ENCODE measurements at regions of chr7 and their contacts with region 1.

Region 1: DNA sequence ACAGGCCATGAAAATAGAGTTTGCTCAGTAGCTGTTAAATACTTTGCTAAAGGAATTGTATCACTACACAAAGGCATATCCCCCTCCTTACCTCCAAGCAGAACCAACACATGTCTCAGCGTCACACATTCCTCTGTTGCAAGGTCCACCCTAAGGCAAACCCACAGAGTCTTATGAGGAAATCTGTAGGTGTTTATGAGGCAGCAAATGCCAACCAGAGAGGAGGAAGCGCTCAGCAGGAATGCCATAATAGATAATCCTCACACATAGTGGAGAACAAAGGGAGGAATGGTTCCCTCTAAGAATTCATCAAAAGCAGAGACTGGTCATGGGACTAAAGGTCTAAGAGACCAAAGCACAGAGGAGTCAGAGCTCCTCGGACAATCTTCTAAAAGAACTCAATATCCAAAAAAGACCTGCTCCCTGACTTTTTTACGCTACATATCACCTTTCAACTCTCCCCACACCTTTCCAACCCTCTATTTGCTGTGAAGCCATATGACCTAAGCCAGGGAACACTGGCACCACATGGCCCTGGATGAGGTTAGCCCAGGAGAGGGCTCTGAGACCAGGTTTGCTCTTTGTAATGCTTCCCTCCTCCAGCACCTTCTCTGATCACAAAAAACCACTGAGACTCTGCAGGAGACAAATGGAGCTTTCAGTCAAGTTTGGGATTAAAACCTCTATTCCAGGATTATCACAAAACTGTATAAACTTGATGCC is 7.3 kb downstream of the SLC25A13 start:
- DNase-seq: no peak
- ATAC-seq: no peak

Region 2: GRCh38 chr7:96299496-96299895 is 15.1 kb before region 1 on chr7:
- intact Hi-C with region 1: loop called (anchors 1 kb)
- DNase-seq: no peak
- ATAC-seq: no peak